Activated CD4-positive, alpha-beta T cell treated with anti-CD3 and anti-CD28 coated beads for 36 hours (primary cell): ENCODE measurements at regions of chrX and their contacts with region 1.

Region 1: DNA sequence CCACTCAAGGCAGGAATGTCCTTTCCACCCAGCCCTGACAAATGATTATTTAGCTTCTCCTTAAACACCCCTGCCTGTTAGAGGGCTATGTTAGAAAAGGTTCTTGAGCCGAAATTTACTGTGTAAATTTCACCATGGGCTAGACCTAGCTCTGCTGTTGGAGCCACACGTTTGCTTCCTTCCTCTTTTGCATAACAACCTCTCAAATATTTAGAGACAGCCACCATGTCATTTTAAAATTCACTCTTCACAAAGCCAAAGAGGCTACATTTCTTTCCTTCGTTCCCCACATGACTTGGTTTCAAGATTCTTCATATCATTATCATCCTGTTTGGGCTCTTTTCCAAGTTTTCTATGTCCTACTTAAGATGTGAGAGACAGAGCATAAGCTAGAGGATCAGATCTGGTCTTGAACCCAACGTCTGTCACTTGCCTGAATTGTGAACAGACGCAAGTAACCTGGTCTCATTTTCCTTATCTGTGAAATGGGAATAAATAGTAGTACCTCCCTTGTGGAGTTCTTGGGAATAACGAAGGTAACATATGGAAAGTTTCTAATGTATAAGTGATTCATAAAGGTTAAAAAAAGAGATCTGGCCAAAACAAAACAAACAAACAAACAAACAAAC is 6.7 kb downstream of the DOCK11 start:
- DNase-seq: no peak
- ATAC-seq: no peak
- H3K4me3 Mint-ChIP-seq: peak overlapping the region; percentile 66
- H3K27ac Mint-ChIP-seq: peak overlapping the region; percentile 99
- H3K4me1 Mint-ChIP-seq: peaks cover 59% of the 10 kb centered on the region
- H3K27me3 Mint-ChIP-seq: no peaks in the 10 kb centered on the region

Region 2: DNA sequence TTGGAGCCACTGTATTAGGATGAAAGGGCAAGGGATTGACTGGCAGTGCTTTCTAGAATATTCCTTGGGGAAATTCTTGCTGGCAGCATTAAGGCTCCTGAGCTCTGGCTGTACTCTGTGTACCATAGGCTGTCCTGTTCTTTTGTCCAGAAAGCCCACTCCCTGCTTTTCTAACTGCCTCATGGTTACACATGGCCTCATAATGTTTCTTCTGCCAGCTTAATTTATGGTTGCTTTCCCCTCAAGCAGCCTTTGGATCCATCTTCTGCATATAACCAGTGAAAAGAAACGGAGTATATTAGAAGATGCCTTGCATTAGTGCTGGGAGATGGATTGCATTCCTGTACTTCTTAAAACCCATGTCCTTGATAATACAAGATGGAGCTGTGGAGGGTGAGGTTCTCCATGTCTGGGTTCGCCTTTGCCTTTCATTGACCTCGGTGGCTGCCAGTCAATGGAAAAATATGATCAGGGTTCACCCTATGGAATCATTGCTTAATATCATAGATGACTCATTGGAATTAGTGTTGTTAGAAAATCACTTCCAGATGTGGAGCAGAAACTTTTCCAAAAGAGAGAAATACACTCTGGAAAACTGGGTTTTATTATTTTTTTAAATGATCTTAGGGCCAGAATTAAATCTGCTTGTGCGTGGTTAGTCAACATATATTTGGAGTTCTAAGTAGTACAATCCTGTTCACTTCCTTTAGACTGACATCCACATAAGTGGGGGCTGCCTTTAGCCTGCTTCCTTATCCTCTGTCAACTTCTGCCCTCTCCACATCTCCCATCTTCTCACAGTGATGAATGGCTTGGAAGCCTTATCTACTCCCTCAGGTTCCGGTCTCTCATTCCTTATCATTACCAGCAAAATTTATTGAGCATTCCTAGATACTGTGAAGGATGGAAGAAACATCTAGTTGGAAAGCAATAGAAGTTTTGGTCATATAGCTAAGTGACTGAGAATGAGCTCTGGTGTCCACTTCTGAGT is 18.2 kb after region 1 on chrX:
- CTCF ChIA-PET with region 1: interaction called, 3 read pairs
- POLR2A ChIA-PET with region 1: no interaction called
- intact Hi-C with region 1: loop called in 1 of 2 experiments (anchors 2 kb)
- DNase-seq: no peak
- ATAC-seq: no peak
- H3K4me3 Mint-ChIP-seq: no peak overlapping the region
- H3K27ac Mint-ChIP-seq: peak overlapping the region; percentile 84
- H3K4me1 Mint-ChIP-seq: peaks cover 72% of the 10 kb centered on the region
- H3K27me3 Mint-ChIP-seq: no peaks in the 10 kb centered on the region

Region 3: DNA sequence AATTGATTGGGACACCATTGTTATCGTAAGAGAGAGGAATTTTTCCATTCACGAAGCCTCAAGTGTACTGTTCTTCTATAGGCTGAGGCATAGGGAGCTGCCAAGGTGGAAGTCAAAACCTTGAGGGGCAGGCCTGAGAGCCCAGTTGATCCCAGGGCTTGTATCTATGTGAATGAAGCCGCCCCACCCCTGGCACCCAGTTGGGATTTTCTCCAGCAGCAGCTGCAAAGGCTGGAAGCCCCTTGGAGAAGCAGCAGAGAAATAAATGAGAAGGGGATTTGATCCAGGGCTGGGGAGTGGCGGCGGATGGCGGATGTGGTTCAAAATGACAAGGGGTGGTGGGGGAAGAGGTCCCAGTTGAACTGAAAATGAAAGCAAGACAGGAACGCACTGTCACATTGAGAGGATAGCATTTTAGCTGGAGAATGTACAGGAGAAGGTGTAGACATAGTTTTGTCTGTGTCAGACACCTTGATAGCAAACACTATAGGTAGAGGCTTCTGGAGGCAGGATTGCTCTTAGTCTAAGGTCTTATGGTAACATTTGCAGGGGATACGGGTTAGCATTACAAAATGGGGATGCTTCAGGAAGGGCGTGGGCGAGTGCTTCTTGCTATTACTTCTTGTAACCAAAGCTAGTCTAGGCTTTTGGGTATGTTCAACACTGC is 25.9 kb after region 1 on chrX:
- CTCF ChIA-PET with region 1: interaction called, 3 read pairs
- POLR2A ChIA-PET with region 1: interaction called, 14 read pairs
- intact Hi-C with region 1: loop called (anchors 2 kb)
- DNase-seq: peak; percentile 74
- ATAC-seq: peak; percentile 67
- H3K4me3 Mint-ChIP-seq: peak overlapping the region; percentile 85
- H3K27ac Mint-ChIP-seq: peak overlapping the region; percentile 100
- H3K4me1 Mint-ChIP-seq: peaks cover 78% of the 10 kb centered on the region
- H3K27me3 Mint-ChIP-seq: no peaks in the 10 kb centered on the region

Region 4: DNA sequence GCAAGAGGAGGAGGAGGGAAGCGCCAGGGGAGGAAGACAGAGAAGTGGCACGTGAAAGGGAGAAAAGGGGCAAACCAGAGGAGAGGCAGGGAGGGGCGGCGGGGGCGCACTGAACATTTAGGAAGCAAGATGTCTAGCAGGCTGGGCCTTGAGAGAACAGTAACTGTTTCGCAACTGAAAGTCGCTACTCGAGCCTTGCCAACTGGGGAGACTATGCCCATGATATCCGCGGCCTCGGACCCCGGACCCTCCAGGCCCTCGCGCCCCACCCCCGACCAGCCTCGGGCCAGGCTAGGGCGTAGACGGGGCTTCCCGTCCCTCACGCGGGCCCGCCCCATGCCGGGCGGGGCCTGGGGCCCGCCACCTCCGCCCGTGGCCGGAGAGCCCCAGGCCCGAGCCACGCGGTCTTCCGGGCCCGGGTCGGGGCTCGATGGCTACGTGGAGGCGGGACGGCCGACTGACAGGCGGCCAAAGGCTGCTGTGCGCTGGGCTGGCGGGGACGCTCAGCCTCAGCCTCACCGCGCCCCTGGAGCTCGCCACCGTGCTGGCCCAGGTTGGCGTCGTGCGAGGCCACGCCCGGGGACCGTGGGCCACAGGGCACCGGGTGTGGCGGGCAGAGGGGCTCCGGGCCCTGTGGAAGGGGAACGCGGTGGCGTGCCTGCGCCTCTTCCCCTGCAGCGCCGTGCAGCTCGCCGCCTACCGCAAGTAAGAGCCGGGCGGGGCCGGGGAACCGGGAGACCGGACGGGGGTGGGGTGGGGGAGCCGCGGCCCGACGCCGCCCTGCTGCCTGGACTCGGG is 896.9 kb after region 1 on chrX and contains the start of gene SLC25A43:
- CTCF ChIA-PET with region 1: no interaction called
- POLR2A ChIA-PET with region 1: no interaction called
- intact Hi-C with region 1: no loop called
- DNase-seq: peak; percentile 45
- ATAC-seq: peak; percentile 83
- H3K4me3 Mint-ChIP-seq: peak within 1 kb of the TSS; percentile 65
- H3K27ac Mint-ChIP-seq: peak within 1 kb of the TSS; percentile 60
- H3K4me1 Mint-ChIP-seq: peaks cover 14% of the 10 kb centered on the region
- H3K27me3 Mint-ChIP-seq: no peaks in the 10 kb centered on the region
- total RNA-seq, gene SLC25A43: 3.6 to 4.8 TPM